Activated naive CD4-positive, alpha-beta T cell treated with anti-CD3 and anti-CD28 coated beads for 36 hours (primary cell): ENCODE measurements at regions of chr12 and their contacts with region 1.

Region 1: GRCh38 chr12:10212201-10213131 is at the start of gene GABARAPL1:
- DNase-seq: peak; percentile 91
- H3K4me3 Mint-ChIP-seq: peak within 1 kb of the TSS; percentile 89
- H3K27ac Mint-ChIP-seq: peak within 1 kb of the TSS; percentile 82
- H3K4me1 Mint-ChIP-seq: peaks cover 25% of the 10 kb centered on the region
- H3K27me3 Mint-ChIP-seq: no peaks in the 10 kb centered on the region
- total RNA-seq, gene GABARAPL1: 3.3 to 4.9 TPM

Region 2: DNA sequence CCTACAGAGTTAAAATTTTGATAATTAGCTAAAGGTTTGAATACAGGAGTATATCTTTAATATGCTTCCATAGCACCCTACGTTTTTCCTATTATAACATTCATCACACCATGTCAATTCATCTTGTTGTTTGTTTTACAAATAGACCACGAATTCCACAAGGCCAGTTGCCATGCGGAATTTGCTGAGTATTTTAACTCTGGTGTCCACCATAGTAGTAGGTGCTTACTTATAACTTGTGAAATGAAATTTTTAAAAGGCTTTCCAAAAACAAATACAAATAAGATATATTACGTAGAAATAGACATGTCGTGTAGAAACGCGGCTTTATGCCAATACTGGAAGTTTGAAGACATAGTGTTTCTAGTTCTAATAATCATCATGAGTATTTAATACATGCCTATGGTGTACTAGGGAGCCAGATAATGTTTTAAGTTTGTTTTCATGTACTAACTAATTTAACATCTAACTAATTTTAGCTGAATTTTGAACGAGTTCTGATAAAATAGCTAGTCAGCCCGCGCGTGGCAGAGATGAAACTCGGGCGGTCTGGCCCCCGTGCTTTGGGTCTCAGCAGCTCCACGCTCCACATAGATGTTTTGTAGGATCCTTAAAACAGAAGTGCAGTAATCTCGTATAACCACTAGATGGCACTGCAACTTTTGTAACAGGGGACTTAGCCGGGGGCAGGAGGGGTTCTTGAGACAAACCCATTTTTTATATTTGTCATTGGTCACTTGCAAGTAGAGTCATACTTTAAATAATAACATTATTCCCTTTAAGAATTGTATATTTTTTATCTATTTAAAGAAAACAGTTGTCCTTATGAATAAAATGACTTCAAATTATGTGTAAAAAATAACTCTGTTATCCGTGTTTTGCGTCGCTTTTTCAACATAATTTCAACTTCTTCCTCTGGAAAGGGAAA is 461.9 kb before region 1 on chr12:
- CTCF ChIA-PET with region 1: no interaction called
- intact Hi-C with region 1: loop called (anchors 2 kb)
- DNase-seq: peak; percentile 68
- H3K4me3 Mint-ChIP-seq: peak overlapping the region; percentile 74
- H3K27ac Mint-ChIP-seq: peak overlapping the region; percentile 71
- H3K4me1 Mint-ChIP-seq: peaks cover 44% of the 10 kb centered on the region
- H3K27me3 Mint-ChIP-seq: no peaks in the 10 kb centered on the region

Region 3: DNA sequence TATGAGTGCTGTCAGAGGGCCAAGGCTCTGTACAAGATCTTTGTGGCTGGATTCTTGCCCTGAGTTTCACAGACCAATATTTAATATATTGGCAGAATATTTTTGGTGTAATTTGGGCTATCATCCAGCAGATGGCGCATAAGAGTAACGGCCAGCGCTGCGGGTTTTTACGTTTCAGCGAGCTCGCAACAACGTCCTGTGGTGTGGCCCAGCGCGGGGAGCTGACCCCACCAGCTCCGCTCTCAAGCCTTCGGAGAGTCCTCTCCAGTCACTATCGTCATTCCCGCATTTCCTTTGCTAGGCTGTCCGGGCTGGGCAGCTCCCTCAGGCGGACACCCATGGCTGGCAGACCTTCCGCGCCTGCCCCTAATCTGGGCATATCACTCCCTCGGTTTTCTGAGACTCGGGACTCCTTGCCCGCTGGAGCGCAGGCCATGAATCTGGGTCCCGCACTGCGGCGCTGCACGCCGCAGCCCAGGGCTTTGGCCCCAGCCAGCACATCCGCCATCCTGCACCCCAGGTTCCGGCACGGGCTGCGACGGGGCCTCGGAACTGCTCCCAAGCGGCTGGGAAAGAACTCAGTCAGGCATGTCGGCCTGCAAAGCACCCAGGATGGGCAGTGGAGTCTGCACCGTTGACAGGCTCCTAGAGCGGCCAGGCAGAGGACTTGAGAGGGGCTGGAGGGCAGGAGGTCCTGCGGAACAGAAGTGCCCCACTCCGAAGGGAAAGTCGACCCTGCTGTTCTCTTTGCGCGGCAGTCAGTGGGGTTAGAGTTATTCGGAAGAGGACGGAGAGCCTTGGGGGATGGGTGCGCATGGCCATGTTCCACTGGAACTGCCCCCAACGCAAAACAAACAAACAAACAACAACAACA is 59.0 kb before region 1 on chr12:
- CTCF ChIA-PET with region 1: interaction called, 12 read pairs
- intact Hi-C with region 1: loop called (anchors 1 kb)
- DNase-seq: peak; percentile 66
- H3K4me3 Mint-ChIP-seq: peak overlapping the region; percentile 76
- H3K27ac Mint-ChIP-seq: peak overlapping the region; percentile 63
- H3K4me1 Mint-ChIP-seq: peaks cover 10% of the 10 kb centered on the region
- H3K27me3 Mint-ChIP-seq: peaks cover 18% of the 10 kb centered on the region

Region 4: DNA sequence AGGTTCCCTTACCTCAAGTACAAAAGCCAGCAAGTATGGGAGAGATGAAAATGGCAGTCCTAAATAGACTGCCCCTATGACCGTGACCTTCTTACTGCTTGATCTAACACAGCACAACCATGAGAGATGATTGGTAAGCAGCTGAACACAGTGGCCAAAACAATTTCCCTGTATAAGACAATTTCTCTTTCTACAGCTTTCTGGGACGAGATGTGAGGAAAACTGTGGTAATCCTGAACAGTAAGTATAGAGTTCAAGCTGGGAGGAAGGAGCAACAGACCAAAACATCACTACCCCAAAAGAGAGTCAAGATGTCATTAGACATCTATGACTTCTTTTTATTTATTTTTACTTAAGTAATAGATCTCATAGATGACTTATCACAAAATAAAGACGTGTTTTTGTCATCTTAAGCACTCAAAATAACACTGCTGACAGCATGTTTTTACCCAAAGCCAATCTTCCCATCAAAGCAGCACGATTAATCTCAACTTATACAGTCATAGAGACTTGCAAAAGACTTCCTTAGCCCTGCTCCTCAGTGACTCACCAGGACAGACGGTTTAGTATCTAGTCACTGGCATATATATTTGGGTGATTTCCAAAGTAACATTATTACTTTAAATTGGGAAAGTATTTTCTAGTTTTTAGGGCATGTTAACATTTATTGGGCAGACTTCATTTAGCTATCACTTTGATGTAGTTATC is 30.0 kb before region 1 on chr12:
- CTCF ChIA-PET with region 1: no interaction called
- intact Hi-C with region 1: no loop called
- DNase-seq: no peak
- H3K4me3 Mint-ChIP-seq: no peak overlapping the region
- H3K27ac Mint-ChIP-seq: no peak overlapping the region
- H3K4me1 Mint-ChIP-seq: peaks cover 5% of the 10 kb centered on the region
- H3K27me3 Mint-ChIP-seq: peaks cover 16% of the 10 kb centered on the region

Region 5: GRCh38 chr12:10304161-10304574 is 91.7 kb after region 1 on chr12:
- CTCF ChIA-PET with region 1: no interaction called
- intact Hi-C with region 1: loop called (anchors 1 kb)
- DNase-seq: peak; percentile 59
- H3K4me3 Mint-ChIP-seq: no peak overlapping the region
- H3K27ac Mint-ChIP-seq: no peak overlapping the region
- H3K4me1 Mint-ChIP-seq: peaks cover 49% of the 10 kb centered on the region
- H3K27me3 Mint-ChIP-seq: peaks cover 5% of the 10 kb centered on the region

Region 6: GRCh38 chr12:10540776-10541205 is 328.3 kb after region 1 on chr12:
- CTCF ChIA-PET with region 1: no interaction called
- intact Hi-C with region 1: loop called (anchors 1 kb)
- DNase-seq: no peak
- H3K4me3 Mint-ChIP-seq: no peak overlapping the region
- H3K27ac Mint-ChIP-seq: peak overlapping the region; percentile 22
- H3K4me1 Mint-ChIP-seq: peaks cover 15% of the 10 kb centered on the region
- H3K27me3 Mint-ChIP-seq: peaks cover 36% of the 10 kb centered on the region

Region 7: DNA sequence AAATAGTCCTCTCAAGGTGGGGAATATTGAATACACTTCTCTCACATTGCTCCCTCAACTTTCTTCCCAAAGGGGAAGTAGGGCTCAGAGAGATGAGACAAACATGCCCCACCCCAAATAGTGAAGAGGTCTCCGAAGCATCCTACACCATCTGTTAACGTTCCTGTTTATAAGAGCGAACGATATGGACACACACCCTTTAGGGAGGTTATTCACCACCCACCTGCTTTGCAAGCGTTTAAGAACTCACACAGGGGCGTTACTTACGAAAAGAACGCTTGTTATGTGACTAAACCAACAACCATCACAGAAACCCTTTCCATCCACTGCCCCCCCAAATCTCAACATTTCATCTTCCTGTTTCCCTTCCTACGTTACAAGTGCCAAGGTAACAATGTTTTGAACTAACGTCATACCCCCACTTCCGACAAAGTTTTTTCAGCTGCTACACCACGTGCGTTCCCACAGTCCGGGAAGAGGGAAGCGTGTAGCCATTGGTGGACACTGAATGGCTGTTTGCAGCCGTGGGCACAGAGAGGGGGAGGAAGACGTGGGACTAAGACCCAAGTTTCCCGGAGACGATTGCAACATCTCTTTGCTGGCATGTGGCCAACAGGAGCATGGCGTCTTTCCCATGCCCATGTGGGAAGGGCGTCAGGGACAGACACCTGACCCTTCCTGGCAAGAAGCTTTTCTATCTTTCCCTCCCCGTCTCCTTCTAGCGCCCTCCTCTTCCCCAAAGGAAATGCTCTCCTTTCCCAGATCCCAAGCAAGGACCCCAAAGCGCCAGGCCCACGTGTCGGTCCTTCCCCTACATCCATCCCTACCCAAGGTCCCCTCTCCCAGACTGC is 509.4 kb after region 1 on chr12:
- CTCF ChIA-PET with region 1: no interaction called
- intact Hi-C with region 1: loop called (anchors 1 kb)
- DNase-seq: peak; percentile 77
- H3K4me3 Mint-ChIP-seq: peak overlapping the region; percentile 95
- H3K27ac Mint-ChIP-seq: peak overlapping the region; percentile 94
- H3K4me1 Mint-ChIP-seq: peaks cover 30% of the 10 kb centered on the region
- H3K27me3 Mint-ChIP-seq: peaks cover 31% of the 10 kb centered on the region

Region 8: GRCh38 chr12:11171145-11171968 is 958.9 kb after region 1 on chr12 and contains the start of gene SMIM10L1:
- CTCF ChIA-PET with region 1: interaction called, 4 read pairs
- intact Hi-C with region 1: loop called (anchors 2 kb)
- DNase-seq: peak; percentile 94
- H3K4me3 Mint-ChIP-seq: peak within 1 kb of the TSS; percentile 97
- H3K27ac Mint-ChIP-seq: peak within 1 kb of the TSS; percentile 99
- H3K4me1 Mint-ChIP-seq: peaks cover 38% of the 10 kb centered on the region
- H3K27me3 Mint-ChIP-seq: no peaks in the 10 kb centered on the region
- total RNA-seq, gene SMIM10L1: 5.0 to 5.6 TPM